GM10248 (cell line): ENCODE measurements at regions of chr17 and their contacts with region 1.

Region 1: GRCh38 chr17:39244600-39245570 is 19.1 kb upstream of the STAC2 start:
- DNase-seq: peak; percentile 84
- CTCF ChIP-seq: peak; percentile 95

Region 2: GRCh38 chr17:39164675-39165143 is 80.2 kb before region 1 on chr17:
- CTCF ChIA-PET with region 1: interaction called, 12 read pairs
- POLR2A ChIA-PET with region 1: no interaction called
- DNase-seq: peak; percentile 97
- CTCF ChIP-seq: peak; percentile 75

Region 3: DNA sequence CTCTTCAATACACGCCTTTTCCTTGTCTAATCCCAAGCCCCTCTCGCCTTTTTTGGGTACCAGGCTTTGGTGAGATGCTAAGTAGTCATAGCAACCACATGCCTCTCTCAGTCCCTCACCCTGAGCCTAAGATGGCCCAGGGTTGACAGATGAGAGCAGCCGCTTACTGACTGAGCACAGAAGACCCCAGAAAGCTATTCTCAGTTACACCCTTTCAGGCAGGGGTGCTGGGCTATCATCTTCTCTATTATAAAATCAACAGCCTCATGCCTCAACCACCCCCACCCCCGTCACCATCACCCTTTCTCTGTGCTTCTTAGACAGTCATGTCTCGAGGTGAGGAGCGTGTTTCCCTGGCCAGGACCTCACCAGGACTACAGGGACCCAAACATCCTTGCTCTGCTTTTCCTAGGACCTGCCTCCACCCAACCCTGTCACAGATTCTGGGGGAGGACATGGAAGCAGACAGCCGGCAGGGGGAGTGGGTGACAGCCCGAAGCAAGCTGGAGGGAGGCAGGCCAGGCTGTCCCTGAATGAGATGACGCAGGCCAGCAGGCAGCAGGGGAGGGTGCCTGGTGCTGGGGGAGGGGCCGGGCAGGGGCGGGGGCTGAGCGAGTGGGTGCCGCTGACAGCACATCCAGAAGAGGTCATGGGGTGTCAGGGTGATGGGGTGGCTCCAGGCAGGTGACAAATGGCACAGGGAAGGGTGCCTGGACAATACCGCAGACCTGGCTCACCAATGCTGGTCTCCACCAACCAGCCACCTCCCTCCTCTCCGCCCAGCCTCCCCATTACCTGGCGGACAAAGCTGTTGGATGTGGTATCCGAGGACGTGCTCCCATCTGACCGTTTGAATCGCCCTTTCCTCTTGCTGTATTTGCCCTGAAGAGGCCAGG is 50.5 kb before region 1 on chr17:
- CTCF ChIA-PET with region 1: interaction called, 13 read pairs
- POLR2A ChIA-PET with region 1: interaction called, 8 read pairs
- DNase-seq: no peak
- CTCF ChIP-seq: no peak

Region 4: DNA sequence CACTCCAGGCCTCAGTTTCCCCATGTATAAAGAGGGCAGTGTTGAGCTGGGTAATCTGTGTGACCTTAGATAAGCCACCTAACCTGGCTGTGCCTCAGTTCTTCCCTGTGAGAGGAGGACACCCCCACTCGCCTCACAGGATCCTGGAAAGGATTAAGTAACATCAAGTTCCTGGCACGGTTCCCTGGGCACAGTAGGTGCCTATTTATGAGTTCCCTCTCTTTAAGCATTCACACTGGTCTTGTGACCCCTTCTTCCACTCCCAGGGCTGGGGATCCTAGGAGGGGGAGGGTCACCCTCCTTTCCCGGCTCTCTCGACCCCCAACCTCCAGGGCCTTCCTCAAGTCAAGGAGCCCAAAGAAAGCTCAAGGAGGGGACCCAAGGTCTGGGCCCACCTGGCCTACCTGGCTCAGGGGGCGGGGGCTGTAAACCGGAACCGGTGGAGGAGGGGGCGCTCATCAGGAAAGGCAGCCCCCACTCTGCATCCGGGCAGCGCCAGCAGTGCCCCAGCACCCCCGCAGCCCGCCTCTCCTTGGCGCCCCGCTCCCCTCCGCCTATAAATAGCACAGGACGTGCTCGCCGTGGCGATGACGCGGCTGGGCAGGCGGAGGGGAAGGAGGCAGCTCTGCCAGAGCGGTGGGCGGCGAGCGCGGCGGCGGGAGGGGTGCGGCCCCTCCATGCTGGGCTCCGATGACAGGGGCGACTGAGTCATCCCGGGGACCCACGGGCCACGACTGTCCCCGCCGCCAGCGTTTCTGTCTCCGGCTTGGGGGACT is 35.4 kb before region 1 on chr17:
- CTCF ChIA-PET with region 1: interaction called, 151 read pairs
- POLR2A ChIA-PET with region 1: interaction called, 10 read pairs
- DNase-seq: no peak
- CTCF ChIP-seq: no peak

Region 5: DNA sequence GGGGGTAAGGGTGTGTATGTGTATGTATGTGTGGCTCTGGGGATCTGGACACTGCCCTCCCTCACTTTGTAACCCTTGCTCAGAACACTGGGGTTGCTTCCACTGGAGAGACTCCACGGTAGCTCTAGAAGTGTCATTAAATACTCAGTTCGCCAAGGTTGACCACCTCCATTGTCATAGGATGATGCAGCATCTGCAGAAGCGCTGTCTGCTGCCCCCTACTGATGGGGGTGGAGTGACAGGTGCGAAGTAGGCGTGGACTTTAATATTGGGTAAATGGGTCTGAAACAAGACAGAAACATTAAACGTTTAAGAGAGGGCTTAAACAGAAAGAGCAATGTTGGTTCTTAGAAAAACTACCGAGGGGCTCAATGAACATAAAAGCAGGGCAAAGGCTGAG is 16.4 kb after region 1 on chr17:
- CTCF ChIA-PET with region 1: interaction called, 30 read pairs
- POLR2A ChIA-PET with region 1: no interaction called
- DNase-seq: no peak
- CTCF ChIP-seq: no peak

Region 6: GRCh38 chr17:39450847-39451581 is 206.1 kb after region 1 on chr17 and contains the start of gene MED1:
- CTCF ChIA-PET with region 1: no interaction called
- POLR2A ChIA-PET with region 1: no interaction called
- DNase-seq: peak; percentile 98
- CTCF ChIP-seq: no peak